ENCODE measurements at regions of chr2 and their contacts with region 1.

Region 1: GRCh38 chr2:11710234-11710975 is 36.0 kb upstream of the LPIN1 start:
- DNase-seq: peak; percentile 59 to 96
- H3K4me3 ChIP-seq: no peak overlapping the region
- H3K27ac ChIP-seq: peak overlapping the region; percentile 80
- H3K4me1 ChIP-seq: peaks cover 72% of the 10 kb centered on the region
- H3K27me3 ChIP-seq: no peaks in the 10 kb centered on the region
- CTCF ChIP-seq: no peak

Region 2: DNA sequence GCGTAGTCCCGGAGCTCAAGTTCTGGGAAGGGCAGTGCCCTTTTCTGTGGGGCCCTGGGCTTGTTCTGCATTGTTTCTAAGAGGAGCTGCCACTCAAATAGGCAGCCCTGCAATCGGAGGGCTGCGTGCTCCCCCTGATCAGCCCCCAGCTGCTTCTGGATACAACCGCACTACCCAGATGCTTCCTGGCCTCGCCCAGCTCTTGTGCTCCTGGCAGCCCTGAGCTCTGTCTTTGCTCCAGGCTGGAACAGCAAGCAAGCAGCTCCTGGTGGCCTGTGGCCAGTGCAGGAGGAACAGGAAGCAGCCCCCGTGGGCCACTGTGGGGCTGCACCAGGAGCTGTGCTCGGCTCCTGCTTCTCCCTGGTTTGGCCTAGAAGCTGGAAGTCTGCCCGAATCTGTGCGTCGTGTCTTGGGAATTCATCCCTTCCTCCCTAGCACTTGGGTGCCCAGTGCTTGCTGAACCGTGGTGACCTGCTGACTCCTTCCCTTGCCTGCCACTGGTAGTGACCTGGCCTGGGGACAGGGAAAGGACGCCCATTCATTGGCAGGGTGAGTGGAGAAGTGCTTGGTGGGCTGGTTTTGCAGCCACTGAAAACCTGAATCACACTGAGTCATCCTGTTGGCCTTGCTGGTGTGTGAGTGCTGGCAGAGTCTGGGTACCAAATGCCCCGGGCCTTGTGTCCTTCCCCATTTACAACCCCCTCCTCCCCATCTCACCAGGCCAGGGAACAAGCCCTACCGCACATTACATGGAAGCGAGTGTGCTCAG is 13.1 kb before region 1 on chr2:
- CTCF ChIA-PET with region 1: no interaction called
- POLR2A ChIA-PET with region 1: no interaction called
- intact Hi-C with region 1: loop called (anchors 1 kb)
- DNase-seq: peak; percentile 93 to 99
- H3K4me3 ChIP-seq: peak overlapping the region; percentile 24; the same call in 1 of the 2 replicates
- H3K27ac ChIP-seq: peak overlapping the region; percentile 83
- H3K4me1 ChIP-seq: peaks cover 79% of the 10 kb centered on the region
- H3K27me3 ChIP-seq: no peaks in the 10 kb centered on the region
- CTCF ChIP-seq: no peak

Region 3: GRCh38 chr2:11980809-11981208 is 270.4 kb after region 1 on chr2:
- CTCF ChIA-PET with region 1: no interaction called
- POLR2A ChIA-PET with region 1: no interaction called
- intact Hi-C with region 1: no loop called
- DNase-seq: no peak
- H3K4me3 ChIP-seq: no peak overlapping the region
- H3K27ac ChIP-seq: no peak overlapping the region
- H3K4me1 ChIP-seq: no peaks in the 10 kb centered on the region
- H3K27me3 ChIP-seq: no peaks in the 10 kb centered on the region
- CTCF ChIP-seq: no peak